ENCODE measurements at regions of chr19 and their contacts with region 1.

Region 1: GRCh38 chr19:52660981-52661380 is 22.8 kb upstream of the ZNF83 start:
- DNase-seq: no peak
- H3K4me3 ChIP-seq: no peak overlapping the region
- H3K27ac ChIP-seq: no peak overlapping the region
- H3K4me1 ChIP-seq: peaks cover 0 to 9% (median 2%) of the 10 kb centered on the region in 4 experiments; a peak in 4 of 7 replicates
- H3K27me3 ChIP-seq: no peaks in the 10 kb centered on the region
- CTCF ChIP-seq: no peak
- EP300 ChIP-seq: no peak
- POLR2A ChIP-seq: no peak
- RAD21 ChIP-seq: no peak

Region 2: GRCh38 chr19:52554216-52554971 is 106.6 kb before region 1 on chr19:
- CTCF ChIA-PET with region 1: no interaction called
- POLR2A ChIA-PET with region 1: no interaction called
- DNase-seq: no peak
- H3K4me3 ChIP-seq: no peak overlapping the region
- H3K27ac ChIP-seq: no peak overlapping the region
- H3K4me1 ChIP-seq: peaks cover 0 to 6% (median under 1%) of the 10 kb centered on the region in 4 experiments; a peak in 3 of 7 replicates
- H3K27me3 ChIP-seq: no peaks in the 10 kb centered on the region
- CTCF ChIP-seq: no peak
- EP300 ChIP-seq: no peak
- POLR2A ChIP-seq: no peak
- RAD21 ChIP-seq: no peak

Region 3: GRCh38 chr19:52640916-52641315 is 20.1 kb before region 1 on chr19:
- CTCF ChIA-PET with region 1: interaction called, 12 read pairs
- POLR2A ChIA-PET with region 1: no interaction called
- DNase-seq: peak; percentile 44 to 48
- H3K4me3 ChIP-seq: no peak overlapping the region
- H3K27ac ChIP-seq: no peak overlapping the region
- H3K4me1 ChIP-seq: peaks cover 0 to 3% (median 0%) of the 10 kb centered on the region in 4 experiments; a peak in 3 of 7 replicates
- H3K27me3 ChIP-seq: no peaks in the 10 kb centered on the region; a peak in 1 of 7 replicates
- CTCF ChIP-seq: no peak
- EP300 ChIP-seq: no peak
- POLR2A ChIP-seq: no peak
- RAD21 ChIP-seq: no peak

Region 4: DNA sequence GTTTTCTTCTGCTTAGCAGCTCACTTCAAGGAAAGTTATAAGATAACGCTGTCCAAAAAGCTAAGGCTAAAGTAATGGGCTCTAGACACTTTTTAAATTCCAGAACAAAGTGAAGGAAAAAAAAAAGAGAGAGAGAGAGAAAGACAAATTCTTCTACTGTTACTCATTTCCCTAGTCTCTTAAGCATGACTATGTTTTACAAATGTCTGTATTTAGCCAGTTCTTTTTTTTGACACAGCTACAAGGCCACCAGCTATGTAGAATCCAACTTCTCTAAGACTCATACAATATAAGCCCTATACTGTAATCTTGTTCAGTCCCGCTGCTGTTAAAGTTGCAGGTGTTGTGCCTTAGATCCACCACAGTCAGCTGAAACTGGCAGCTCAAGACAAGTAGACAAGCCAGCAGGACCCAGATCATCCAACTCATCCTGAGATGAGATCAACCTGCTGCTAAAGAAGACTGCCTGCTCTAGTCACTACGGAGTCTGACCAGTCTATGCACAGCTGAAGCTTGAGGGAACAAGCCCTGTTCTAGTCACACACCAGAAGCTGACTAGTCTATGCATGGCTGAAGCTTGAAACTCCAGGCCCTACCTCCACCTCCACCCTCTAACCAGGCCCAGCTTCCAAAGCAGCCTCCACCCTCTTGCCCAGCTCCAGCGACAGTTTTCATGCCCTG is 12.5 kb before region 1 on chr19:
- CTCF ChIA-PET with region 1: interaction called, 15 read pairs
- POLR2A ChIA-PET with region 1: no interaction called
- DNase-seq: no peak
- H3K4me3 ChIP-seq: no peak overlapping the region
- H3K27ac ChIP-seq: no peak overlapping the region
- H3K4me1 ChIP-seq: no peaks in the 10 kb centered on the region
- H3K27me3 ChIP-seq: no peaks in the 10 kb centered on the region
- CTCF ChIP-seq: no peak
- EP300 ChIP-seq: no peak
- POLR2A ChIP-seq: no peak
- RAD21 ChIP-seq: no peak